ENCODE measurements at regions of chr3 and their contacts with region 1.

Region 1: GRCh38 chr3:116770815-116771450 is 61.4 kb downstream of the TUSC7 start:
- DNase-seq: peak; percentile 59 to 63
- H3K4me3 ChIP-seq: no peak overlapping the region
- H3K27ac ChIP-seq: no peak overlapping the region
- H3K4me1 ChIP-seq: no peaks in the 10 kb centered on the region
- H3K27me3 ChIP-seq: no peaks in the 10 kb centered on the region
- CTCF ChIP-seq: peak; percentile 86

Region 2: DNA sequence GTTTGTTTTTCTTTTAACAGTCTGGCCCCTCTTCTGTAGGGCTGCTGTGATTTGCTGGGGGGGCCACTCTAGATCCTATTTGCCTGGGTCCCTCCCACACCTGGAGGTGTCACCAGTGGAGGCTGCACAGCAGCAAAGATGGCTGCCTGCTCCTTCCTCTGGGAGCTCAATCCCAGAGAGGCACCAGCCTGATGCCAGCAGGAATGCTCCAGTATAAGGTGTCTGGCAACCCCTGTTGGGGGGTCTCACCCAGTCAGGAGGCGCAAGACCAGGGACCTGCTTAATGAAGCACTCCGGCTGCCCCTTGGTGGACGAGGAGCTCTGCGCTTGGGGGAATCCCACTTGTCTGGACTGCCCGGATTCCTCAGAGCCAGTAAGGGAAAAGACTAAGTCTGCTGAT is 1029.3 kb before region 1 on chr3:
- CTCF ChIA-PET with region 1: interaction called, 11 read pairs
- POLR2A ChIA-PET with region 1: no interaction called
- intact Hi-C with region 1: no loop called
- DNase-seq: no peak
- H3K4me3 ChIP-seq: no peak overlapping the region
- H3K27ac ChIP-seq: no peak overlapping the region
- H3K4me1 ChIP-seq: no peaks in the 10 kb centered on the region
- H3K27me3 ChIP-seq: 0 out of 2 replicates have a peak, but pooled peaks cover 6% of the 10 kb centered on the region
- CTCF ChIP-seq: no peak

Region 3: GRCh38 chr3:116701070-116701469 is 69.9 kb before region 1 on chr3:
- CTCF ChIA-PET with region 1: no interaction called
- POLR2A ChIA-PET with region 1: no interaction called
- intact Hi-C with region 1: no loop called
- DNase-seq: no peak
- H3K4me3 ChIP-seq: no peak overlapping the region
- H3K27ac ChIP-seq: no peak overlapping the region
- H3K4me1 ChIP-seq: no peaks in the 10 kb centered on the region
- H3K27me3 ChIP-seq: peaks cover 16% of the 10 kb centered on the region
- CTCF ChIP-seq: no peak

Region 4: DNA sequence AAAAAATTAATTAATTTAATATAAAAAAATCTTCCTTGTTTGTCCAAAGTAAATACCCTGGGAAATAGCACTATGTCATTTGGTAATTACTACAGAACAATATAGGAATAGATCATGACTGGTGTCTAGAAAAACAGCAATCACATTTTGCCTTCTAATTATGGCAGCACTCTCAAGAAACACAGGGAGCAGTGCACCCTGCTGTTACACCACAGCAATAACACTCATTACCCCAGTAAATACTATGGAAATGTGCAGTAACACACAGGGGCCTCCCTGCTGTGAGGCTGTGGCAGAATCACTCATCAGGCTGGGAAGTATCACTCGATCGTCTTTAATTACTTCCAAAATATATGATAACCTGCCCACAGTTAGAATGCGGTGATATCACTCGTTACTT is 584.6 kb after region 1 on chr3:
- CTCF ChIA-PET with region 1: no interaction called
- POLR2A ChIA-PET with region 1: no interaction called
- intact Hi-C with region 1: no loop called
- DNase-seq: no peak
- H3K4me3 ChIP-seq: no peak overlapping the region
- H3K27ac ChIP-seq: no peak overlapping the region
- H3K4me1 ChIP-seq: no peaks in the 10 kb centered on the region
- H3K27me3 ChIP-seq: no peaks in the 10 kb centered on the region
- CTCF ChIP-seq: no peak

Region 5: DNA sequence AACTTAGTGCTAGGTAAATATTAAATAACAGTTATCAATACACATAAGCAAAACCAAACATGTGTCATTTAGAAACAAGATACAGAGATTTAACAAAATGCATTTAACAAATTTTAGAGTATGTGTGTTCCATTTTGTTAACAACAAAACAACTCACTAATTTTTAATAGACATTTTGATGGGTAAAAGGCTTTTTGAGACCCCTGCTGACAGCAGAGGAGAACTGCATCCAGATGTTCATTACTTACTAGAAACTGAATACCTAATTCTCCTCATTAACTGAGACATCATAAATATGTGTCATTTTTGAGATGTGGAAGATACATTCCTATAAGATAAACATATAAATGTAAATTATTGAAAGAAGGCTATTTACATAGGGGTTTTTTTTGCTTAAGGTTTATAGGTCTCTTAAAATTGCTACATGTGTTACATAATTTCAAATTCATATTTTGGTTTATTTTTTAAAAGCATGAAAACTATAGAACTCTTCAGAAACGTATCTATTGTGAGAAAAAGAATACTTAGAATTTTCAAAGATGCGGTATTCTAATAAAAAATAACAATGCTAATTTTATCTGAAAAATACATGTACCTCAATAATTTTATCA is 948.5 kb after region 1 on chr3:
- CTCF ChIA-PET with region 1: no interaction called
- POLR2A ChIA-PET with region 1: no interaction called
- intact Hi-C with region 1: loop called (anchors 5 kb)
- DNase-seq: peak in 1 of 2 experiments; percentile 37
- H3K4me3 ChIP-seq: no peak overlapping the region
- H3K27ac ChIP-seq: no peak overlapping the region
- H3K4me1 ChIP-seq: no peaks in the 10 kb centered on the region
- H3K27me3 ChIP-seq: no peaks in the 10 kb centered on the region
- CTCF ChIP-seq: peak; percentile 77